ENCODE measurements at regions of chr19 and their contacts with region 1.

Region 1: DNA sequence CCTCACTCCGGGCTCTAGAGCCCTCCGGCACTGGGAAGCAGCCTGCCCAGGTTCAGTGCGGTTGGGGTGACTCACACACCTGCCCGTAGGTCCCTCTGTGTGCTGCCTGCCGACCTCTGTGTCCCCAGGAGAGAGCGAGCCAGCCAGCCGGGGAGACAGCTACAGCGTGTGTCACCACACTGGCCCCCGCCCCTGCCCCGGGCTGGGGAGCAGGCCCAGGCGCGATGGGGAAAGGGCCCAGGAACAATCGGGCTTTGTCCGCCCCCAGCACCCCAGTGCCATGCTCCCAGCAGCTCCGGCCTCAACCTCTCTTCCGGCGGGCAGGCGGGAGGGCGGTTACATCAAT is at the start of gene KLK6:
- DNase-seq: peak; percentile 97 to 99
- H3K4me3 ChIP-seq: peak within 1 kb of the TSS; percentile 76
- H3K27ac ChIP-seq: peak within 1 kb of the TSS; percentile 92
- H3K4me1 ChIP-seq: peaks cover 79% of the 10 kb centered on the region
- H3K27me3 ChIP-seq: no peaks in the 10 kb centered on the region
- CTCF ChIP-seq: no peak
- total RNA-seq, gene KLK6: 490 and 581 TPM in 2 replicates

Region 2: GRCh38 chr19:50943074-50943828 is 26.1 kb before region 1 on chr19:
- CTCF ChIA-PET with region 1: no interaction called
- POLR2A ChIA-PET with region 1: interaction called, 12 read pairs
- intact Hi-C with region 1: no loop called
- DNase-seq: peak in 1 of 2 experiments; percentile 38
- H3K4me3 ChIP-seq: no peak overlapping the region
- H3K27ac ChIP-seq: no peak overlapping the region
- H3K4me1 ChIP-seq: peaks cover 8% of the 10 kb centered on the region; the same call in 1 of the 2 replicates
- H3K27me3 ChIP-seq: no peaks in the 10 kb centered on the region
- CTCF ChIP-seq: no peak

Region 3: DNA sequence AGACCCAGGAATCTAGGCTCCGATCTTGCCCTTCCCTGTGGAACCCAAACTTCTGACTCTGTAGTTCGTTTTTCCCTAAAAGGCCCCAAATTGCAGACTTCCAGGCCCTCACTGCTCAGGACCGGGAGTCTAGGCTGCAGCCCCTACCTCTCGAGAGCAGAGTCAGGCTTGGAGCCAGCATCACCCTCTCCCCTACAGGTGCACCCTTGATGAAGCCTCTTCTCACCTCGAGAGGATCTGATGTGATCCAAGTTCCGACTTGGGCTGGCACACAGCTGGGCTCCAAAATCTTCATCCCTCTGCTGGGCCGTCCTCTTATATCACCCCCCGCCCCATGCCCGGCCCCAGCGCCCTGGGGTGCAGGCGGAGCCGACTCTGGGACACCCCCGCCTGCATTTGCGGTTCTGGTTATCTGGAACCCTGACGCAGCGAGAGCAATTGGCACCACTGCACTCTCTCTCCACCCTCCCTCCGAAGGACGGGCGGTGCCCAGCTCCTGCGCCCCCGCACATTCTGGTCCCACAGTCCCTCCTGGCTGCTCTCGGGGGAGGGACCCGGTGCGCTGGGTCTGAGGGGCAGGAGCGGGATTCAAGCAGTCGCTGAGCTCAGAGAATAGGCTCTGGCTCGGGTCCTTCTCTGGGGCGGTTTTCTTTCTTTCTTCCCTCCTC is 14.4 kb after region 1 on chr19 and contains the start of gene KLK7:
- CTCF ChIA-PET with region 1: interaction called, 5 read pairs
- POLR2A ChIA-PET with region 1: interaction called, 22 read pairs
- intact Hi-C with region 1: no loop called
- DNase-seq: peak in 1 of 2 experiments; percentile 65
- H3K4me3 ChIP-seq: no peak within 1 kb of the TSS
- H3K27ac ChIP-seq: no peak within 1 kb of the TSS
- H3K4me1 ChIP-seq: peaks cover 12% of the 10 kb centered on the region
- H3K27me3 ChIP-seq: no peaks in the 10 kb centered on the region
- CTCF ChIP-seq: no peak
- total RNA-seq, gene KLK7: 98.1 and 138 TPM in 2 replicates

Region 4: DNA sequence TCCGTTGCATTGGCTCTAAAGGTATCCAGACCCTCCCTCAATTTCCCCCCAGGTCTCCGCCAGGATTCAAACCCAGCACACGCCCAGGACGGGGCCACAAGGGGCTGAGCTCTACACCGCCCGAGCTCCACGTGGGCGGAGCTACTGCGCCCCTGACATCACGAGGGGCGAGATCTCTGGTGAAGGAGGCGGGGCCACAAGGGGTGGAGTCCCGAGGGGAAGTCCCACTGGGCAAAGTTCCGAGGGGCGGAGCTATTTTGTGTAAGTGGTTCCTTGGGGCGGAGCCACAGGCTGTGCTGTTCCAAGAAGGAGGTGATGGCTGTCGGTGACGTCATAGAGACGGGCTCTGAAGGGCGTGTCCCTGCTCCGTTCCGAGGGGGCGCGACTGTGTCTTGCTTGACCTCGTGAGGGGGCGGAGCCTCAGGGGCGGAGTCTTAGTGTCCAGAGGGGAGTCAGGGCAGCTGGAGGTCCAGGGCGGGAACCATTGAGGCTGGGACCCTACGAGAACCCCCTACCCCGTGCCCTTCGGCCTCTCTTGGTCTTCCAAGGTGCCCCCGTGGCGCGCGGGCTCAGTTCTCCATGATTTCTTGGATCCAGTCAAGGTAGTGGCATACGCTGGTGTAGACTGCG is 33.3 kb after region 1 on chr19:
- CTCF ChIA-PET with region 1: no interaction called
- POLR2A ChIA-PET with region 1: interaction called, 15 read pairs
- intact Hi-C with region 1: loop called (anchors 1 kb)
- DNase-seq: peak; percentile 94 to 98
- H3K4me3 ChIP-seq: peak overlapping the region; percentile 64
- H3K27ac ChIP-seq: peak overlapping the region; percentile 66
- H3K4me1 ChIP-seq: peaks cover 8% of the 10 kb centered on the region
- H3K27me3 ChIP-seq: no peaks in the 10 kb centered on the region
- CTCF ChIP-seq: no peak